Heart left ventricle (tissue), 16 donors: ENCODE measurements at regions of chr14 and their contacts with region 1.

Region 1: DNA sequence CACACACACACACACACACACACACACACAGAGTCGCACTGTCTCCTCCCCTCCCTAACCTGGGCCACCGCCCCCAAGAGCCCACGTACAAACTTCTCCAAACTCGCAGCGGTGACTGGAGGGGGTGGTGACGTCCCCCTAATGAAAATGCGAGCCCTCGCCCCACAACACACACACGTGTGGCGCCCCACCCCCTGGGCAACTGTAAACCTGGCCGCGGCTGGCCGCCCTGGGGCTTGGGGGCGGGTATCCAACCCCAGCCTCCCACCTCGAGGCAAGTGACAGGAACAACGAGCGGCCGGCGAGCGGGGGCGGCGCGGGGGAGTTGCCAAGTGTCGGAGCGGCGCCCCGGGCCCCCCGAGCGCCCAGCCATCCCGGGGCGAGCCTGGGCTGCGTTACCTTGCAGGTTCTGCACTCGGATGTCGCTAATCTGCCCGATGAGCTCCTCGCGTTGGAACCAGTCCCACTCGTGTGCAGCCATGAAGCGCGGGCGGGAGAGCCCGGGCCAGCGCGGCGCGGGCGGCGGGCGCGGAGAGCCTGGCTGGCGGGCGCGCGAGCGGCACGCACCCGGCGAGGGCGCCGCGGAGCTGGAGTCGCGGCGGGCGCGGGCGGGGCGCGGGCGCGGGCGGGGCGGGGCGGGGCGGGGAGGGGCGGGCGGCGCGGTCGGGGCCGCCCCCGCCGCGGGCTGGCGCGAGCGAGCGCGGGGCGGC is at the start of gene CLMN:
- DNase-seq: peak in 4 of 5 donors; percentile 34 to 48 (median 48)
- ATAC-seq: peak in 3 of 4 donors; percentile 34 to 61 (median 59)
- H3K4me3 ChIP-seq: peak within 1 kb of the TSS; percentile 64 to 99 (median 87)
- H3K27ac ChIP-seq: peak within 1 kb of the TSS; percentile 58 to 91 (median 80)
- H3K4me1 ChIP-seq: peaks cover 0 to 58% (median 7%) of the 10 kb centered on the region in 12 donors
- H3K27me3 ChIP-seq: no peaks in the 10 kb centered on the region
- CTCF ChIP-seq: no peak
- POLR2A ChIP-seq: no peak
- total RNA-seq, gene CLMN: 4.6 to 10.2 (median 6.8) TPM

Region 2: GRCh38 chr14:95255487-95255886 is 64.0 kb before region 1 on chr14:
- intact Hi-C with region 1: loop called in 1 of 10 experiments (anchors 5 kb)
- DNase-seq: peak in 3 of 5 donors; percentile 48 to 58 (median 50)
- ATAC-seq: peak in 3 of 4 donors; percentile 41 to 55 (median 55)
- H3K4me3 ChIP-seq: no peak overlapping the region
- H3K27ac ChIP-seq: no peak overlapping the region
- H3K4me1 ChIP-seq: peaks cover 6 to 44% (median 13%) of the 10 kb centered on the region in 12 donors
- H3K27me3 ChIP-seq: peaks cover 0 to 3% (median 0%) of the 10 kb centered on the region in 9 donors
- CTCF ChIP-seq: no peak
- POLR2A ChIP-seq: no peak

Region 3: DNA sequence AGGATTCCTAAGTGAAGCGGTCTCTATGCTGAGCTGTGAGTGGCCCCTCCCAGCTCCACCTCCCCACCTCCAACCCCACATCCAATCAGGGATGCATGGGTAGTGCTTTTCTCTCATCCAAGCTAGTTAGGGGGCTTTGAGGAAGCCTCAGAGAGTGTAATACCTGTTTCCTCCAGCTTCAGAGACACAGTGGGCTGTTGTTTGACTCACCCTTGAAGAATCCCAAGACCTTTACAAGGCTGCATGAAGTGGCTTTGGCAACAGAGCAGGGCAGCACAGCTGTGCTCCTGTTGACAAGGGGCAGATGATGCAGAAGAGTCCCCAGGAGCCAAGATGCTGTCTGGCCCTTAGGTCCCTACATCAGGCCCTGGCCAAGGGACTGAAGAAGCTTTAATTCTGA is 27.4 kb after region 1 on chr14:
- intact Hi-C with region 1: no loop called
- DNase-seq: no peak
- ATAC-seq: peak in 2 of 4 donors; percentile 31 to 39
- H3K4me3 ChIP-seq: no peak overlapping the region
- H3K27ac ChIP-seq: no peak overlapping the region
- H3K4me1 ChIP-seq: peaks cover 0 to 2% (median 0%) of the 10 kb centered on the region in 12 donors
- H3K27me3 ChIP-seq: no peaks in the 10 kb centered on the region
- CTCF ChIP-seq: no peak
- POLR2A ChIP-seq: no peak

Region 4: GRCh38 chr14:95389471-95390011 is 70.1 kb after region 1 on chr14:
- intact Hi-C with region 1: loop called in 2 of 10 experiments (anchors 2 to 5 kb)
- DNase-seq: peak; percentile 84 to 97 (median 91)
- ATAC-seq: peak; percentile 92 to 97 (median 96)
- H3K4me3 ChIP-seq: no peak overlapping the region
- H3K27ac ChIP-seq: peak overlapping the region; percentile 72 to 98 (median 86)
- H3K4me1 ChIP-seq: peaks cover 0 to 28% (median 13%) of the 10 kb centered on the region in 12 donors
- H3K27me3 ChIP-seq: no peaks in the 10 kb centered on the region
- CTCF ChIP-seq: no peak
- POLR2A ChIP-seq: peak in 1 of 2 donors; percentile 35

Region 5: GRCh38 chr14:95424529-95424928 is 105.1 kb after region 1 on chr14:
- intact Hi-C with region 1: loop called in 2 of 10 experiments (anchors 5 to 10 kb)
- DNase-seq: no peak
- ATAC-seq: peak in 3 of 4 donors; percentile 44 to 70 (median 45)
- H3K4me3 ChIP-seq: no peak overlapping the region
- H3K27ac ChIP-seq: no peak overlapping the region
- H3K4me1 ChIP-seq: peaks cover 0 to 5% (median 0%) of the 10 kb centered on the region in 12 donors
- H3K27me3 ChIP-seq: no peaks in the 10 kb centered on the region
- CTCF ChIP-seq: no peak
- POLR2A ChIP-seq: no peak